Activated CD8-positive, alpha-beta T cell treated with anti-CD3 and anti-CD28 coated beads for 36 hours (primary cell): ENCODE measurements at regions of chr17 and their contacts with region 1.

Region 1: GRCh38 chr17:45218895-45219661 is 2.6 kb upstream of the FMNL1 start:
- DNase-seq: peak; percentile 94
- ATAC-seq: peak; percentile 12
- H3K4me3 Mint-ChIP-seq: peak overlapping the region; percentile 94
- H3K27ac Mint-ChIP-seq: peak overlapping the region; percentile 63
- H3K4me1 Mint-ChIP-seq: peaks cover 26% of the 10 kb centered on the region
- H3K27me3 Mint-ChIP-seq: no peaks in the 10 kb centered on the region
- CTCF ChIP-seq: peak; percentile 99

Region 2: GRCh38 chr17:45197555-45198334 is 21.3 kb before region 1 on chr17:
- CTCF ChIA-PET with region 1: interaction called, 37 read pairs
- POLR2A ChIA-PET with region 1: interaction called, 3 read pairs
- intact Hi-C with region 1: no loop called
- DNase-seq: peak; percentile 91
- ATAC-seq: peak; percentile 100
- H3K4me3 Mint-ChIP-seq: no peak overlapping the region
- H3K27ac Mint-ChIP-seq: no peak overlapping the region
- H3K4me1 Mint-ChIP-seq: peaks cover 5% of the 10 kb centered on the region
- H3K27me3 Mint-ChIP-seq: no peaks in the 10 kb centered on the region
- CTCF ChIP-seq: peak; percentile 99

Region 3: DNA sequence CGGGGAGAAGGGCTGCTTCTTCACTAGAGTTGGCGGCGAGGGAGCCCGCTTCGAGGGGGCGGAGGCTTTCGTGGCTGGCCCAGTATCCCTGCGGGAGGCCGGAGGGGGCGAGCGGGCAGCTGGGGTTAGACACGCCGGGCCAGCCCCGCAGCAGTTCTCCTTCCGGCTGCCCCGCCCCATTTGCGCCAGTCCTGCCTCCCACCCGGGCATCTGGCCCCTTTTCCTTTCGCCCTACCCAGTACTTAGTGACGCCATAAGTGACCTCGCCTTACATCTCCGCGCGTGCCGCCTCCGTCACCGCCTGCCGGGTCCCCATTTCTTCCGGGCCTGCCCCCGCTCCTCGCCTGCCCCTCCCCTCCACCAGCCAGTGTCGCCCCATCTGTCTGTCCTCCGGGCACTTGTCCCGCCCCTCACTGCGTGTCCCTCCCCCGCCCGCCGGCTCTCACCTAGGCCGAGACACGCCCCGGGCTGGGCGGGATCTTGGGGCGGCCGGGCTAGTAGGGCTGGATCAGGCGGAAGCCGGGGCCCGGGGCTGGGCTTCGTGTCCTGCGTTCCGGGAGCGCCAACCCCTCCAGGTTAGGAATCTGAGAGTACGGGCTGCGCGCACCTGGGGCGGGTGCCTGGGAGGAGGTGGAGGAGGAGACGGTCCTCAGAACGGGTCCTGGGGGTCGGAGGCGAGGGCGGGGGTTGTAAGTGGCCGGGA is 28.5 kb after region 1 on chr17:
- CTCF ChIA-PET with region 1: interaction called, 43 read pairs
- POLR2A ChIA-PET with region 1: interaction called, 399 read pairs
- intact Hi-C with region 1: no loop called
- DNase-seq: peak; percentile 100
- ATAC-seq: peak; percentile 91
- H3K4me3 Mint-ChIP-seq: peak overlapping the region; percentile 88
- H3K27ac Mint-ChIP-seq: peak overlapping the region; percentile 91
- H3K4me1 Mint-ChIP-seq: peaks cover 61% of the 10 kb centered on the region
- H3K27me3 Mint-ChIP-seq: no peaks in the 10 kb centered on the region
- CTCF ChIP-seq: no peak

Region 4: GRCh38 chr17:45270828-45271418 is 51.8 kb after region 1 on chr17:
- CTCF ChIA-PET with region 1: interaction called, 49 read pairs
- POLR2A ChIA-PET with region 1: interaction called, 4 read pairs
- intact Hi-C with region 1: no loop called
- DNase-seq: peak; percentile 75
- ATAC-seq: peak; percentile 88
- H3K4me3 Mint-ChIP-seq: no peak overlapping the region
- H3K27ac Mint-ChIP-seq: peak overlapping the region; percentile 79
- H3K4me1 Mint-ChIP-seq: peaks cover 25% of the 10 kb centered on the region
- H3K27me3 Mint-ChIP-seq: no peaks in the 10 kb centered on the region
- CTCF ChIP-seq: peak; percentile 80

Region 5: GRCh38 chr17:45293413-45294211 is 74.5 kb after region 1 on chr17:
- CTCF ChIA-PET with region 1: interaction called, 12 read pairs
- POLR2A ChIA-PET with region 1: no interaction called
- intact Hi-C with region 1: no loop called
- DNase-seq: peak; percentile 47
- ATAC-seq: peak; percentile 69
- H3K4me3 Mint-ChIP-seq: no peak overlapping the region
- H3K27ac Mint-ChIP-seq: peak overlapping the region; percentile 84
- H3K4me1 Mint-ChIP-seq: peaks cover 76% of the 10 kb centered on the region
- H3K27me3 Mint-ChIP-seq: no peaks in the 10 kb centered on the region
- CTCF ChIP-seq: no peak

Region 6: DNA sequence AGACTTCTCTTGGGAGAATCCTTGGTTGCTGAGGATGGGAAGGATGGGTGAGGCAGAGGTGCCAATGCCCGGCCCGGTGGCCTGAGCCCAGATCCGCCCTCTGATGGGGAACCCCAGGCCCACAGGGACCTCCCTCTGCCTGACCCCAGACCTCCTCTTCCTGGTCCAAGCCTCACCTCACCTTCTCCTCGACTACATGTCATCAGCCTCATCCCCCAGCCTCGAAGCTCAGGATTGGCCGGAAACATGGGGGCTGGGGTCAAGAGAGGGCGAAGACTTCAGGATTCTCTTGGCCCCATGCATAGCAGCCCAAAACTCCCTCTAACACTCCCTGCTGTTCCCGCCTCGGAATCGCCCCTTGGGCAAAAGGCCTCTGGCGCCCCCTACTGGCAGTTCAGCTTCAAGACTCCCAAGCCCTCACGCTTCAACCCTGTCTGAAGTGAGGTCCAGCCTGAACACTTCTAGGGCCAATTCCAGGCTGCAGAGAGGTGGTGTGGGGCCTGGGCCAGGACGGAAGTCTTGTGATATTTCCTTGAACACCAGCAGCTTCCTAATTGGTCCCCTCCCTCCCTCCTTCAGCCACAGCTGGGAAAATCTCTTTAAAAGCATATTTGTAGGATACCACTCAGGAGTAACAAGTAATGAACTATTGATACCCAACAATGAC is 166.4 kb after region 1 on chr17:
- CTCF ChIA-PET with region 1: interaction called, 72 read pairs
- POLR2A ChIA-PET with region 1: interaction called, 4 read pairs
- intact Hi-C with region 1: loop called (anchors 5 kb)
- DNase-seq: peak; percentile 92
- ATAC-seq: peak; percentile 86
- H3K4me3 Mint-ChIP-seq: no peak overlapping the region
- H3K27ac Mint-ChIP-seq: peak overlapping the region; percentile 74
- H3K4me1 Mint-ChIP-seq: peaks cover 27% of the 10 kb centered on the region
- H3K27me3 Mint-ChIP-seq: peaks cover 11% of the 10 kb centered on the region
- CTCF ChIP-seq: peak; percentile 97